RWPE1 (cell line): ENCODE measurements at regions of chr14 and their contacts with region 1.

Region 1: GRCh38 chr14:105468603-105469241 is 5.9 kb upstream of the CRIP2 start:
- DNase-seq: no peak
- H3K27ac ChIP-seq: peak overlapping the region; percentile 100
- CTCF ChIP-seq: no peak

Region 2: GRCh38 chr14:105480952-105481801 is 12.5 kb after region 1 on chr14:
- CTCF ChIA-PET with region 1: interaction called, 13 read pairs
- POLR2A ChIA-PET with region 1: interaction called, 3 read pairs
- DNase-seq: peak; percentile 77
- H3K27ac ChIP-seq: peak overlapping the region; percentile 100
- CTCF ChIP-seq: peak; percentile 96

Region 3: GRCh38 chr14:105554022-105554421 is 85.3 kb after region 1 on chr14:
- CTCF ChIA-PET with region 1: no interaction called
- POLR2A ChIA-PET with region 1: no interaction called
- DNase-seq: no peak
- H3K27ac ChIP-seq: no peak overlapping the region
- CTCF ChIP-seq: no peak